ENCODE measurements at regions of chr2 and their contacts with region 1.

Region 1: GRCh38 chr2:61538200-61538919 is at the start of gene XPO1:
- DNase-seq: peak; percentile 100
- ATAC-seq: peak; percentile 96
- total RNA-seq, gene XPO1: 66.4 TPM

Region 2: GRCh38 chr2:61658841-61659780 is 120.8 kb after region 1 on chr2:
- intact Hi-C with region 1: loop called (anchors 5 kb)
- DNase-seq: no peak
- ATAC-seq: peak; percentile 88

Region 3: DNA sequence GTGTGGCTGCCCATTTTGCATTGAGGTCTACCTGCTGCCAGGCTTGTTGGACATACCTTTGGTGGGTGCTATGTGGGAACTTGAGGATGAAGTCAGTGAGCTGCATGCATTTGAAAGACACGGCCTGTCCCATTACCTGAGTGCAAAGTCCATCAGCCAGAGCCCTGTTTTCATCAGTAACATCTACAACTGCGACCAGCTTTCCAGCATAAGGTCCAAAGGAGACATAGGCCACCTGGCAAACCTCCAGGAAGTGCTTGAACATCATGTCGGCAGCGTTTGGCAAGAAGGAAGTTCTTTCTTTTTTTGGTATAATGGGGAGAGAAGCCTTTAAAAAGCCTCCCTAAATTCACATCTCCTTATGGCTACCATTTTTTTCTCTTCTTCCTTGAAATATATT is 172.4 kb after region 1 on chr2:
- intact Hi-C with region 1: loop called (anchors 5 kb)
- DNase-seq: no peak
- ATAC-seq: no peak

Region 4: GRCh38 chr2:61789807-61790602 is 251.6 kb after region 1 on chr2:
- intact Hi-C with region 1: loop called (anchors 10 kb)
- DNase-seq: no peak
- ATAC-seq: no peak

Region 5: DNA sequence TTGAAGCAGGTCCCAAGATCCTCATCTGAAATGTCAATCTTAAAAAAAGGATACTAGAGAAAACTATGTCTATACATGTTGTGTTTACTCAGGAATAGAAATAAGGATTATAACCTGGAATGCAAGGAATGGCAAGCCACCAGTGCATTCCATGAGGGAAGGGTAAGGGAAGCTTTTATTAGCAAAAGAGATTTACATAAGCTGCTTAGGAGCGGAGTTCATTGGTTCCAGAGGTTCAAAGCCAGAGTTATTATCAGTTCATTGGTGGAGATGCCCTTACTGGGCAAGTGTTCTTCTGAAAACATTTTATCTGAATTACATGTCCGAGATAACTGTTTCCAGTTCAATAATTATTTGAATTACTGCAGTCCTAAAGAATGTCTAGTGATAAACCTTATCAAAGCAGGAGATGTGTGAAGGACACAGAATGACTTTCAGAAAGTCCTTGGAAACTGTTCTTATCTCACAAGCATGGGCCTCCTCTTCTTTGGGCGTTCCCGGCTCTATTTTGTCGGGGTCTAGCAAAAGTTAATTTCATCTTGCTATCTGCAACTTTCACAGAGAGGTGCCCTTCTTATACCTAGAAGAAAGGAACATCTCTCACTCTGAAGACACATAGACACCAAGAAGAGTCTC is 390.6 kb after region 1 on chr2:
- intact Hi-C with region 1: no loop called
- DNase-seq: no peak
- ATAC-seq: no peak

Measured in Right ventricle myocardium inferior (tissue), 1 donor.